Natural killer cell (primary cell): ENCODE measurements at regions of chr17 and their contacts with region 1.

Region 1: GRCh38 chr17:8997994-8998628 is 23.2 kb upstream of the NTN1 start:
- DNase-seq: peak; percentile 79 to 91
- ATAC-seq: peak; percentile 84 to 92 (median 85)
- H3K4me3 ChIP-seq: no peak overlapping the region
- H3K4me3 Mint-ChIP-seq: no peak overlapping the region
- H3K27ac ChIP-seq: no peak overlapping the region
- H3K27ac Mint-ChIP-seq: no peak overlapping the region
- H3K4me1 ChIP-seq: peaks cover 4% of the 10 kb centered on the region
- H3K4me1 Mint-ChIP-seq: peaks cover 5 to 13% of the 10 kb centered on the region in 2 donors
- H3K27me3 ChIP-seq: peaks cover 5% of the 10 kb centered on the region
- H3K27me3 Mint-ChIP-seq: peaks cover 27 to 28% of the 10 kb centered on the region in 2 donors
- CTCF ChIP-seq: peak; percentile 100

Region 2: DNA sequence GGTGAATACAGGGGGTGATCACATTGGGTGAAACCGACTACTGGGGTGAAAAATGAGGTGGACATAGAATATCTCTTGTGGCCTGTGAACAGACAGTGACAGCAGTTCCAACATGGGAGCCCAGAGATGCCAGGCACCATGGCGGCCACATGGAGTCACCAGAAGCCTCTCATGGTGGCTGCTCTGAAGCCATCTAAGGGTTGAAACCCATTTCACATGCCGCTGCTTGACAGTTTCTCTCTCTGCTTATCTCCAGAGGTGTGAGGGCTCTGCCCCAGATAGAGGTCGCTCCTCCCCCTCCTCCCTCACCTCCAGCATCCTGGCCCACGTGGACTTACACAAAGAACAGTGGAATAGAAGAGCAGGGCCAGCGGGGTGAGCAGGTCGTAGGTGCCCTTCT is 92.8 kb before region 1 on chr17:
- intact Hi-C with region 1: loop called (anchors 1 kb)
- DNase-seq: peak in 1 of 2 donors; percentile 50
- ATAC-seq: peak; percentile 73 to 92 (median 92)
- H3K4me3 ChIP-seq: no peak overlapping the region
- H3K4me3 Mint-ChIP-seq: no peak overlapping the region
- H3K27ac ChIP-seq: peak overlapping the region; percentile 55
- H3K27ac Mint-ChIP-seq: peak overlapping the region; percentile 94 to 95
- H3K4me1 ChIP-seq: peaks cover 25% of the 10 kb centered on the region
- H3K4me1 Mint-ChIP-seq: peaks cover 43 to 52% of the 10 kb centered on the region in 2 donors
- H3K27me3 ChIP-seq: no peaks in the 10 kb centered on the region
- H3K27me3 Mint-ChIP-seq: no peaks in the 10 kb centered on the region
- CTCF ChIP-seq: peak; percentile 14

Region 3: DNA sequence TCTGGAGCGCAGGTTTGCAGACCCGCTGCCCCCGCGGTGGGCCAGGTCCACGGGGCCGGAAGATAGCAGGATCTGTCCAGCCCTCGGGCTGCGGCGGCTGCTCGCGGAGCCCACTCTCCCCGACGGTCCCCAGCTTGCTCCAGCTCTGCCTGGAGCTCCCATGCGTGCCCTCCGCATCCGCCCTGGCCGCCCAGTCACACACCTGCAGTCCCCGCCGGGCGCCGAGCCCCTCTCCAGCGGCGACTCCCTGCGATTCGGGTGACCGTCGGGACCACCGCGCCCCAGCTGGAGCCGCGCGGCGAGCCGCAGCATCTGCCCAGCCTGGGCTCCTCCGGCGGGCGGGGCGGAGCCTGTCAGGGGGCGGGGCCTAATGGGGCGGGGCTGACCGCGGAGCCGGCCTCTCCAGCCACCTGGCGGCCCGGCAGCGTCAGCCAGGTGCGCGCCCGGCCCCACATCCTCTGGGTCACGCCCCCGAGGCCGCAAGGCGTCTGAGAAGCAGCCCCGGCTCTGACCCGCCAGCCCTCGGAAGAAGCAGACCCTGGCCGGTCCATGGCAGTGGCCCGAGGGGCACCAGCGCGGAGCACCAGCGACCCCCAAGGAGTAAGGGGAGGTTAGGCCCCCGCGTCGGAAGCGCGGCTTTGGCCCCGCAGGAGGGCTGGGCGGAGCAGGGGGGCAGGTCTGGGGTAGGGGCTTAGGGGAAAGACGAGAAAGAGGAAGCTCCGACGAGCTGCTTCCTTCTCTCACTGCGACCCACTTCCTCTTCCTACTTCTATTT is 32.5 kb before region 1 on chr17 and contains the start of gene PIK3R5:
- intact Hi-C with region 1: no loop called
- DNase-seq: peak; percentile 71 to 88
- ATAC-seq: peak; percentile 60 to 85 (median 72)
- H3K4me3 ChIP-seq: peak within 1 kb of the TSS; percentile 91
- H3K4me3 Mint-ChIP-seq: peak within 1 kb of the TSS; percentile 96
- H3K27ac ChIP-seq: peak within 1 kb of the TSS; percentile 87
- H3K27ac Mint-ChIP-seq: peak within 1 kb of the TSS in 1 of 2 donors; percentile 89
- H3K4me1 ChIP-seq: peaks cover 50% of the 10 kb centered on the region
- H3K4me1 Mint-ChIP-seq: peaks cover 40 to 60% of the 10 kb centered on the region in 2 donors
- H3K27me3 ChIP-seq: no peaks in the 10 kb centered on the region
- H3K27me3 Mint-ChIP-seq: no peaks in the 10 kb centered on the region
- CTCF ChIP-seq: no peak
- total RNA-seq, gene PIK3R5: 254 to 364 (median 348) TPM